ENCODE measurements at regions of chr16 and their contacts with region 1.

Region 1: DNA sequence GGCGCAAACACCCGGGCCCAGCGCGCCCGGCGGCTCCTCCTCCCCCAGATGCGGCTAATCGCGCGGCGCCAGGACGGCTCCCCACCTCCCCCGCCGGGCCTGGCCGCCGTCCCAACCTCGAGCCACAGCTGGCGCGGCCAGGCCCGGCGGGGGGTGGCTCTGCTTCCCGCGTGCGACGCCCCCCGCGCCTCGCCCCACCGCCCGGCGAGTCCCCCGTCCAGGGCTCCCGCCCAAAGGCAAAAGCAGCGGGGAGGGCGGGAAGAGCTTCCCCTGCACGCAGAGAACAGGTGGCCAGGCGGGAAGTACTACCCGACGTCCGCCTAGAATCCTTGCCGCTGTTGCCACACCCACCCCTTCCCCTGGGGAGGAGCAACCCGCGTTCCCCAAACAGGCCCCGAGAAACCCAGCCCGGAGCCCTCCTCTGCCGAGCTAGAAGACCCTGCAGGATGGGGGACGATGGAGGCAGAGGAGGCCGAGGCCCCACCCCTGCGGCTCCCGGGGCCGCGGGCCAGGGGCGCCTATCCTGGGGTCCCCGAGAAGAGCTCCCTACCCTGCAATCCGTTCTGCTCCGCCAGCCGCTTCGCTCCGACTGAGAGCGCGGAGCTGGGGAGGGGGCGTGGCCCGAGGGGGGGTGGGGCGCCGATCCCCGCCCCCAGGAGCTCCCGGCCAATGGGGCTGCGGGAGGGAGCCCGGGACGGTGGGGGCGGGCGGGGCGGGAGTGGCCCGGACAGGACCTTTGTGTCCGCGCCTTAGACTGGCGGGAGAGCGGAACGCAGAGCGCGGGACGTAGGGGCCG is at the start of gene CARHSP1:
- DNase-seq: no peak
- ATAC-seq: peak; percentile 81
- H3K4me3 ChIP-seq: peak within 1 kb of the TSS; percentile 81 to 86
- H3K27ac ChIP-seq: peak within 1 kb of the TSS; percentile 96
- H3K4me1 ChIP-seq: peaks cover 42% of the 10 kb centered on the region
- H3K27me3 ChIP-seq: no peaks in the 10 kb centered on the region
- CTCF ChIP-seq: no peak
- total RNA-seq, gene CARHSP1: 158 TPM

Region 2: GRCh38 chr16:8572919-8573724 is 295.5 kb before region 1 on chr16:
- CTCF ChIA-PET with region 1: no interaction called
- POLR2A ChIA-PET with region 1: no interaction called
- in situ Hi-C with region 1: no loop called
- intact Hi-C with region 1: loop called (anchors 10 kb)
- DNase-seq: no peak
- ATAC-seq: peak; percentile 64
- H3K4me3 ChIP-seq: peak overlapping the region; percentile 26 to 43
- H3K27ac ChIP-seq: peak overlapping the region; percentile 40; the same call in 1 of the 2 replicates
- H3K4me1 ChIP-seq: no peaks in the 10 kb centered on the region
- H3K27me3 ChIP-seq: peaks cover 9% of the 10 kb centered on the region; the same call in 1 of the 2 replicates
- CTCF ChIP-seq: peak; percentile 78

Region 3: GRCh38 chr16:8899709-8900317 is 31.2 kb after region 1 on chr16:
- CTCF ChIA-PET with region 1: no interaction called
- POLR2A ChIA-PET with region 1: interaction called, 14 read pairs
- in situ Hi-C with region 1: no loop called
- intact Hi-C with region 1: no loop called
- DNase-seq: no peak
- ATAC-seq: peak; percentile 28; the same call in 1 of the 2 replicates
- H3K4me3 ChIP-seq: no peak overlapping the region
- H3K27ac ChIP-seq: no peak overlapping the region
- H3K4me1 ChIP-seq: no peaks in the 10 kb centered on the region
- H3K27me3 ChIP-seq: no peaks in the 10 kb centered on the region
- CTCF ChIP-seq: no peak

Region 4: DNA sequence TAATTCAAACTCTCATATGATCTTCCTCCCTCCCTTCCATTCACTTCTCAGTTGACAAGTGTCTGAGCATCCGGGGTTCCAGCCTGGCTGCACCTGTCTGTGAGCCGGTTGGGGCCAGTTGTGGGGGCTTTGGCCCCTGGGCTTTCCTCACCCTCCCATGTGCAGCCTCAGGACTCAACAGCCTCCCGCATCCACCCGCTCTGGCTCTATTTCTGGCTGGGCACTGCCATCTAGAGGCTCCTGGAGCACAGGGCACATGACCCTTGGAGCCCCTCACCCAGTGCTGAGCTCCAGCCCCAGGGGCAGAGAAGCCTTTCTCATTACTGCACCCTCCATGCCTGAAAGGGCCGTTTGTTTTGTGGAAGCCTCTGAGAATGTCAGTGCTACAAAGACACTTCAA is 266.1 kb after region 1 on chr16:
- CTCF ChIA-PET with region 1: no interaction called
- POLR2A ChIA-PET with region 1: no interaction called
- in situ Hi-C with region 1: no loop called
- intact Hi-C with region 1: loop called (anchors 10 kb)
- DNase-seq: no peak
- ATAC-seq: peak; percentile 81
- H3K4me3 ChIP-seq: no peak overlapping the region
- H3K27ac ChIP-seq: no peak overlapping the region
- H3K4me1 ChIP-seq: 0 out of 2 replicates have a peak, but pooled peaks cover 13% of the 10 kb centered on the region
- H3K27me3 ChIP-seq: no peaks in the 10 kb centered on the region
- CTCF ChIP-seq: peak; percentile 84

Region 5: DNA sequence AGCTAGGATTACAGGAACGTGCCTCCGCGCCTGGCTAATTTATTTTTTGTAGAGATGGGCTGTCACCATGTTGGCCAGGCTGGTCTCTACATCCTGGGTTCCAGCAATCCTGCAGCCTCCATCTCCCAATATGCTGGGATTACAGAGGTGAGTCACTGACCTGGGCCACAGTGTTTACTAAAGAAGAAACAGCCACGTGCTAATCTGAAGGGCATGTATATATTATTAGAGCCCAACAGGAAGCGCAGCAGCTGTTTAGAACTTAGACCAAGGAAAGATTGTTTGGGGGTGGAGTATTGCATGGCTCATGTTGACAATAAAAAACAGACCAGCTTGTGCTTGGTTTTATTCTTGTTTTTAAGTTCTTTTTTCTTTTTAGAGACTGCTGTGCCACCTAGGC is 283.0 kb after region 1 on chr16:
- CTCF ChIA-PET with region 1: no interaction called
- POLR2A ChIA-PET with region 1: no interaction called
- in situ Hi-C with region 1: no loop called
- intact Hi-C with region 1: no loop called
- DNase-seq: no peak
- ATAC-seq: no peak
- H3K4me3 ChIP-seq: no peak overlapping the region
- H3K27ac ChIP-seq: no peak overlapping the region
- H3K4me1 ChIP-seq: no peaks in the 10 kb centered on the region
- H3K27me3 ChIP-seq: no peaks in the 10 kb centered on the region
- CTCF ChIP-seq: no peak

Measured in Panc1 (cell line).